Mammary epithelial cell (primary cell): ENCODE measurements at regions of chr4 and their contacts with region 1.

Region 1: GRCh38 chr4:115537387-115537786 is 424.0 kb upstream of the NDST4 start:
- DNase-seq: no peak
- H3K4me3 ChIP-seq: no peak overlapping the region
- H3K27ac ChIP-seq: no peak overlapping the region
- H3K4me1 ChIP-seq: no peaks in the 10 kb centered on the region
- H3K27me3 ChIP-seq: no peaks in the 10 kb centered on the region
- CTCF ChIP-seq: peak; percentile 7 to 32

Region 2: DNA sequence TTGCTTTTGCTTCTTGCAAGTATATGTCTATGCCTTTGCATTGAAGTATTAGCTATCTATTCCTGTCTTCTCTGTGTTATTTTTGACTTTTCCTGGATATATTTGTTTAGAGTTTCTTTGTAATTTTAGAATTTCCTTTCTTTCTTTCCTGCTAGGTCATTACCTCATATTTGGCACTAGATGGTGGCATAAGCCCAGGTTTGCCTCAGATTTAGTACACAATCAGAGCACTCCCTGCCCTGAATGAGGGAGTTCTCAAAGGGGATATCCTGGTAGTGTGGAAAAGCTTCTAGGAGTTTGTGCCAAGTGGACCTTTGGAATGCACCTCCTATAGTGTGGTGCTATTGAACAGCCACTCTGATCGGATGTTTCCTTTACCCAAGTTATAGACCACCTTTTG is 757.2 kb before region 1 on chr4:
- CTCF ChIA-PET with region 1: no interaction called
- dilution Hi-C with region 1: no loop called
- in situ Hi-C with region 1: no loop called
- intact Hi-C with region 1: loop called (anchors 5 kb)
- DNase-seq: no peak
- H3K4me3 ChIP-seq: no peak overlapping the region
- H3K27ac ChIP-seq: no peak overlapping the region
- H3K4me1 ChIP-seq: no peaks in the 10 kb centered on the region
- H3K27me3 ChIP-seq: no peaks in the 10 kb centered on the region
- CTCF ChIP-seq: peak; percentile 33 to 49

Region 3: DNA sequence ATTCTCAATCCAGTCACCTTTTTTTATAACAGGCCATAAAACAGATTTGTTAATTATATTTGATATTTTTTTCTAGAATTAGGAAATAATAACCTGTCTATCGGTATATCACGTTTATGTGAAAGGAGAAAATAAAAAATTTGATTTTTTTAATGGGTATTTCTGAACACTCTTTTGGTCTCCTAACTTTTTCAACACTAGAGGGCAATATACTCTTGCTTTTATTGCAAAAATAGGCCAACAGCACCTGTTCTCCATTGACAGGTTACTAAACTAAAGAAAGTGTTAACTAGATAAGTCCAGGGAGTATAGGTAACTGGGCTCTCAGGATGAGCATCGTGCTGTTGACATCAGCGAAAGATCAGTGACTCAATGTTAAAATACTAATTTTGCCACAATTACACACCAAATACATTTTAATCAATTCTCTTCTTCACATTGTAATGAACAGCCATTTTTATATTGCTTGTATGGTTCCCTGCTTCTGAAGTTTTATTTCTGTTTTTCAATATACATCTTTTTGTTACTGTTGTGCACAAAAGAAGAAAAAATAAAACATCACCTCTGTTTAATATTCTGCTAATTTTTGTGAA is 446.8 kb before region 1 on chr4:
- CTCF ChIA-PET with region 1: no interaction called
- dilution Hi-C with region 1: no loop called
- in situ Hi-C with region 1: loop called in 1 of 2 experiments (anchors 25 kb)
- intact Hi-C with region 1: loop called (anchors 2 kb)
- DNase-seq: peak; percentile 4
- H3K4me3 ChIP-seq: no peak overlapping the region
- H3K27ac ChIP-seq: no peak overlapping the region
- H3K4me1 ChIP-seq: no peaks in the 10 kb centered on the region
- H3K27me3 ChIP-seq: no peaks in the 10 kb centered on the region
- CTCF ChIP-seq: peak; percentile 63